ENCODE measurements at regions of chr17 and their contacts with region 1.

Region 1: DNA sequence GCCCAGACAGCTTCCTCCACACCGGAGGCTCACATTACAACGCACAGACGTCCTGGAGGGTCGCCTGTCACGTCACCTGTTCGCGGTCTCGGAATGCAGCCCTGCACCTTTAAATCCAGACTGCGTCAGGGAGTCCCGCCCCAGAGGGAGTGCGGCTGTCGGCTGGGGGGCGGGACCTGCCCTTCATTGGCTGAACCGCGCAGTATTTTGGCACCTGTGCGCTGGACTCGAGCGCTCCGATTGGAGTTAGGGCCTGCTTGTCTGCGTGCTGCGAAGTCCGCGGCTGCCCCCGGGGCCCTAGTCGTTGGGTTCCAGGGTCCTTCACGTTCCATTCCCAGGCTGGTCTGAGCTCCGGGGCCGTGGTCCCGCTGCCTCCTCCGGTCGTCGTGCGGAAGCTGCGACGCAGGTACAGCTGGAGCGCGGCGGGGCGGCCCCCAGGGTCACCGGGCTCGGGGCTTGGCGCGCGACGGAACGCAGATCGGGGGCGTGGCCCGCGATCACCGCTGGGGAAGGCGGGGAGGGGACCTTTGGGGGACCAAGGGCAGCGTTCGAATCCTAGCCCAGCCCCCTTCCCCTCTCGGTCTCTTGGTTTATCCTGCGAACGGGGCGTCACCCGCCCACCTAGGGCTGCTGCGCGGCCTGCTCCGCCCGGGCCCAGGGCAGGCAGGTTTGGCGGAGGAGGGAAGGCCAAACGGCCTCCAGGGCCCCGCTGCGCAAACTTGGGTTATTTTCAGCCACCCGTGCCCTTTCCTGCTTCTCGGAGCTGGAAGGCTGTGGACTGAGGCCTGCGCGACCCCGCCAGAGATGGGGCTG is at the start of gene MIEF2:
- DNase-seq: peak; percentile 96 to 97
- ATAC-seq: peak; percentile 66 to 75
- H3K4me3 ChIP-seq: peak within 1 kb of the TSS; percentile 90 to 94 (median 90)
- H3K27ac ChIP-seq: peak within 1 kb of the TSS; percentile 98 to 100 (median 99)
- H3K4me1 ChIP-seq: peaks cover 58 to 61% of the 10 kb centered on the region in 2 donors
- H3K27me3 ChIP-seq: no peaks in the 10 kb centered on the region
- CTCF ChIP-seq: peak in 1 of 5 experiments; percentile 9
- POLR2A ChIP-seq: peak; percentile 78 to 79
- total RNA-seq, gene MIEF2: 19.3 to 45.2 (median 34.3) TPM

Region 2: DNA sequence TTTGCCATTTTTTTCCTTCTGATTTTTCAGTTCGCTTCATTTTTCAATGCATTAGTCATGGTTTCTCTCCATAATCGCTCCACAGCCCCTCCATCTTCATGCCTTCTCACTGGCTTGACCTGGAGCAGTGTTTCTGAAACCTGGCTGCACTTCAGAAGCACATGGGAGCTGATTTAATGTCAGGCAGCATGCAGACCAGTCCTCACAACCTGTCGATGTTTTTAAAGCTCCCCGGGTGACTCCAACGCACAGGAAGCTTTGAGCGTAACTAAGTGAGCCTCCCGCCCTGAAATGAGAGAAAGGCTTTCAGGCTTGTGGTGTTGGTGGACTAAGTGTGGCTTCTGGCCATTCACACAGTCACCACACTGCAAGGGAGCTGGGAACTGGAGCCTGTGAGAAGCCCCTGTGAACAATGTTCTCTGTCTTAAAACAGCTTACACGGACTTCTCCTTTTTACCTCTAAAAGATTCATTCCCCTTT is 189.6 kb before region 1 on chr17:
- in situ Hi-C with region 1: no loop called
- intact Hi-C with region 1: no loop called
- DNase-seq: no peak
- ATAC-seq: no peak
- H3K4me3 ChIP-seq: no peak overlapping the region
- H3K27ac ChIP-seq: no peak overlapping the region
- H3K4me1 ChIP-seq: peaks cover 0 to 9% of the 10 kb centered on the region in 2 donors
- H3K27me3 ChIP-seq: no peaks in the 10 kb centered on the region
- CTCF ChIP-seq: no peak
- POLR2A ChIP-seq: no peak

Region 3: DNA sequence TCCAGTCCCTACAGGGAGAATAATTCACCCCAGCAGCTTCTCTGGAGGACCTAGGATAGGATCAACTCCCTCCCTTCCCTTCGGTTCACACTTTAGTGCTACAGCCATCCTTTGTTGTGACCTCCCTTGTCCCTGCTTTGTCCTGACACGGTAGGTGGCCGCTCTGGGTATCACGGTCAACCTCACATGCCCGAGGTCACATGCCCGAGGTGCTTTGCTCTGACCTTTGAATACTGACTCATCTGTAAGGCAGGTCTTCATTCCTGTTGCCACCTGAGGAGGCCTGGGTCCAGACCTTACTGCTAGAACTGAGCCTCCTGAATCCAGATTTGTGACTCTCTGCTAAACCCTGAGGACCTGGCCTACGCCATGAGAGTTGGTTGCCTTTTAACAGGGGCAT is 57.2 kb before region 1 on chr17:
- in situ Hi-C with region 1: no loop called
- intact Hi-C with region 1: no loop called
- DNase-seq: no peak
- ATAC-seq: no peak
- H3K4me3 ChIP-seq: no peak overlapping the region
- H3K27ac ChIP-seq: peak overlapping the region in 3 of 4 donors; percentile 39 to 41 (median 39)
- H3K4me1 ChIP-seq: peaks cover 40 to 47% of the 10 kb centered on the region in 2 donors
- H3K27me3 ChIP-seq: no peaks in the 10 kb centered on the region
- CTCF ChIP-seq: no peak
- POLR2A ChIP-seq: no peak

Region 4: GRCh38 chr17:18225121-18225566 is 35.4 kb before region 1 on chr17:
- in situ Hi-C with region 1: no loop called
- intact Hi-C with region 1: loop called (anchors 2 kb)
- DNase-seq: peak; percentile 93 to 95
- ATAC-seq: peak; percentile 91
- H3K4me3 ChIP-seq: peak overlapping the region; percentile 50 to 67 (median 59)
- H3K27ac ChIP-seq: peak overlapping the region; percentile 65 to 72 (median 71)
- H3K4me1 ChIP-seq: peaks cover 16 to 17% of the 10 kb centered on the region in 2 donors
- H3K27me3 ChIP-seq: no peaks in the 10 kb centered on the region
- CTCF ChIP-seq: no peak
- POLR2A ChIP-seq: no peak

Region 5: DNA sequence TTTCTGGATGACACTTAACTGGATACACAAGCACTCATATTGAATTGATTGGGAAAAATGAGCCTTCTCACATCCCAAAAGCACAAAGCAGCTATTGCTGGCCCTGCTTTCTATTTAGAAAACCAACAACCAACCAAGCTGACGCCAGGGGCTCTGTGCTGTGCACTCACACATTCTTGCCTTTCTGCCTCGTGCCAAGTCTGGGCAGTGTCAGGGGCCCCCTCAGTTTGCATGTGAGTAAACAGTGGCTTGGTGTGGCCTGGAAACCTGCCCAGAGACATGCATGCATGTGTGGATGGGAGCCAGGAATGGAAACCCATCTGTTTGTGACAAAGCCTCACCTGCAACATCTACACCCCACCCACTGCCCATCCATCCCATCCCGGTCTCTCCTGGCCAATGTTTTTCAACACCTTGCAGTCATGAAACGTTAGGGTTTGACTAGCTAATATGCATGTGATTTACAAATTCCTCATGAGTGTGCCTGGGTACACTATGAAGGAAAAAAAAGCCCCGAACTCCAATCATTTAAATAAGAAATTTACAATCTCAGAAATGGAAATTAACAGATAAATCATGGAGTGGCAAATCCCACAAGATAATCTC is 20.3 kb after region 1 on chr17:
- in situ Hi-C with region 1: no loop called
- intact Hi-C with region 1: no loop called
- DNase-seq: no peak
- ATAC-seq: no peak
- H3K4me3 ChIP-seq: no peak overlapping the region
- H3K27ac ChIP-seq: no peak overlapping the region
- H3K4me1 ChIP-seq: no peaks in the 10 kb centered on the region
- H3K27me3 ChIP-seq: no peaks in the 10 kb centered on the region
- CTCF ChIP-seq: no peak
- POLR2A ChIP-seq: no peak